Adrenal gland (tissue), 19 donors: ENCODE measurements at regions of chr6 and their contacts with region 1.

Region 1: DNA sequence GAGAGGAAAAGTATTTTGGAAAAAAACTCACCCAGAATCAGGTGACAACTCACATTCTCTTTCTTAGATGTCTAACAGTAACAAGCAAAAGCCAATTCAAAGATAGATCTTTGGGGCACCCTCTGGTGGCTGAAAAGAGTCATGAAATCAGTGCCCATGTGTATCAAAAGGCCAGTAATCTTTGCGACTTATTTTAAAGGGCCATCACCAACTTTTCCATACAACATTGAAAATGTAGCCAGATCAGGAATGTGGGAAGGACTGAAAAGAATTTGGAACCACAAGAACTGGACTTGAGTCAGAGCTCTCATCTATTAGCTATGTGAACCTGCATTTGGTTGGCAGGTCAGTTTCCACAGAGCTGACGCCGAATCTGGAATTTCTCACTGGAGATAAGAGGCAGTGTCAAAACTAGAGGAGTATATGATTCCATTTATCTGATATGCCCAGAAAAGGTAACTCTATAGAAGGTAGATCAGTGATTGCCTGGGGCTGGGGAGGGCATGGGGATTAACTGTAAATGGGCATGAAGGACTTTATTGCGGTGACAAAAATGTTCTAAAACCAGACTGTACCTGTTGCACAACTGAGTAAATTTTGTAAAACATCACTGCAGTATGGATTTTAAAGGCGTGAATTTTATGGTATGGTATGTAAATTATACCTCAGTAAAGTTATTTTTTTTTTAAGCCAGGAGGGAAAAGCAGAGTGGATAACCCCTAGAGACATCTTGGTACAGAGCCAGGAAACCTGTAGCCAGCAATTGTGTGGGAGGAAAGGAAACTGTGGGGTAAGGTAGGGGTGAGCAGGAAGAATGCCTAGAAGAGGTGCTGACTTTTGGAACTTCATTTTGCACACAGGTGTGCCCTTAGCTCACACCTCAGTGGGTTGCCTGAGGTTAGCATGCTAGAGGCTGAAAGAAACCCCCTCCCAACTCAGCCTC is 117.1 kb upstream of the ASF1A start:
- DNase-seq: peak; percentile 76 to 95 (median 84)
- H3K4me3 ChIP-seq: no peak overlapping the region
- H3K27ac ChIP-seq: no peak overlapping the region
- H3K4me1 ChIP-seq: peaks cover 4 to 6% of the 10 kb centered on the region in 2 donors
- H3K27me3 ChIP-seq: no peaks in the 10 kb centered on the region
- CTCF ChIP-seq: peak; percentile 73 to 89 (median 86)
- POLR2A ChIP-seq: no peak

Region 2: DNA sequence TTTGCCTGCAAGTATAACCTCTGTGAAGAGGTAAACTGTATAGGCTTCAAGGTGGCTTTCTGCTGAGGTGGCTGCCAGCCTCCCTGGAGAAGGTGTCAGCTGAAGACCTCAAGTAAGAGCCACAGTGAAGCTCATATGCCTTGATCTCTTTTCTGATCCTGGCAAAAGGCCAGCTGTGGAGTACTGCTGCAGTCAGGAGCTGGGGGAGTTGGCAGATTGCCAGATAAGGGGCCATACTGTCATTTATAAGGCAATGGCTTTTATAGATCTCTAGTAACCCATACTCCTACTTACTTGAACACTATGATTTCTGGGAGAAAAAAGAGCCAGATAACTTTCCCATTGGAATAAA is 116.7 kb before region 1 on chr6:
- intact Hi-C with region 1: loop called in 1 of 2 experiments (anchors 10 kb)
- DNase-seq: peak in 4 of 7 donors; percentile 23 to 40 (median 34)
- H3K4me3 ChIP-seq: no peak overlapping the region
- H3K27ac ChIP-seq: peak overlapping the region in 2 of 5 donors; percentile 16 to 74
- H3K4me1 ChIP-seq: peaks cover 3 to 11% of the 10 kb centered on the region in 2 donors
- H3K27me3 ChIP-seq: no peaks in the 10 kb centered on the region
- CTCF ChIP-seq: no peak
- POLR2A ChIP-seq: no peak

Region 3: DNA sequence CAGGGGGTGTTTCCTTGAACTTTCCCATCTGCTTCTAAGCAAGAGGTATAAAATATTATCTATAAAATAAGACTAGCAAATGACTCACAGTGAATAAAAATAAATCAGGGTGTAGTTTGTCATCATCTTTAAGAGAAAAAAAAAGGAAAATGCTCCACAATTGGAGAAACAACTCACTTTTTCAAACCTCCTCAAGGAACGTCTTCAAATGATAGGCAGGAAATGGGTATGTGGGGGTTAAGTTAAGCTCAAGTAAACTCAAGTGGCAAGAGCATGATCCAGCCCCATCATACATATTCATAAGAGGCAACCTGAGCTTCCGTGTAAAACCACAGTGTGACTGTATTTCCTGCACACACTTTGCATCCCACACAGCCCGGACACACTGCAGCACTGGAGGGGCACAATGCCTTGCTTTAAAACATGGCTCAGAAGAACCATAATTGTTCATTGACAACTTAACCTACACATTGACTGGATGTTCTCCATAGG is 67.0 kb before region 1 on chr6:
- intact Hi-C with region 1: loop called in 1 of 2 experiments (anchors 10 kb)
- DNase-seq: peak in 5 of 7 donors; percentile 33 to 57 (median 40)
- H3K4me3 ChIP-seq: peak overlapping the region in 1 of 4 donors; percentile 52
- H3K27ac ChIP-seq: peak overlapping the region; percentile 87 to 95 (median 90)
- H3K4me1 ChIP-seq: peaks cover 20 to 36% of the 10 kb centered on the region in 2 donors
- H3K27me3 ChIP-seq: no peaks in the 10 kb centered on the region
- CTCF ChIP-seq: no peak
- POLR2A ChIP-seq: peak in 1 of 2 donors; percentile 15

Region 4: GRCh38 chr6:118864341-118865099 is 87.6 kb after region 1 on chr6:
- intact Hi-C with region 1: no loop called
- DNase-seq: no peak
- H3K4me3 ChIP-seq: no peak overlapping the region
- H3K27ac ChIP-seq: no peak overlapping the region
- H3K4me1 ChIP-seq: peaks cover 0 to 8% of the 10 kb centered on the region in 2 donors
- H3K27me3 ChIP-seq: no peaks in the 10 kb centered on the region
- CTCF ChIP-seq: no peak
- POLR2A ChIP-seq: no peak

Region 5: DNA sequence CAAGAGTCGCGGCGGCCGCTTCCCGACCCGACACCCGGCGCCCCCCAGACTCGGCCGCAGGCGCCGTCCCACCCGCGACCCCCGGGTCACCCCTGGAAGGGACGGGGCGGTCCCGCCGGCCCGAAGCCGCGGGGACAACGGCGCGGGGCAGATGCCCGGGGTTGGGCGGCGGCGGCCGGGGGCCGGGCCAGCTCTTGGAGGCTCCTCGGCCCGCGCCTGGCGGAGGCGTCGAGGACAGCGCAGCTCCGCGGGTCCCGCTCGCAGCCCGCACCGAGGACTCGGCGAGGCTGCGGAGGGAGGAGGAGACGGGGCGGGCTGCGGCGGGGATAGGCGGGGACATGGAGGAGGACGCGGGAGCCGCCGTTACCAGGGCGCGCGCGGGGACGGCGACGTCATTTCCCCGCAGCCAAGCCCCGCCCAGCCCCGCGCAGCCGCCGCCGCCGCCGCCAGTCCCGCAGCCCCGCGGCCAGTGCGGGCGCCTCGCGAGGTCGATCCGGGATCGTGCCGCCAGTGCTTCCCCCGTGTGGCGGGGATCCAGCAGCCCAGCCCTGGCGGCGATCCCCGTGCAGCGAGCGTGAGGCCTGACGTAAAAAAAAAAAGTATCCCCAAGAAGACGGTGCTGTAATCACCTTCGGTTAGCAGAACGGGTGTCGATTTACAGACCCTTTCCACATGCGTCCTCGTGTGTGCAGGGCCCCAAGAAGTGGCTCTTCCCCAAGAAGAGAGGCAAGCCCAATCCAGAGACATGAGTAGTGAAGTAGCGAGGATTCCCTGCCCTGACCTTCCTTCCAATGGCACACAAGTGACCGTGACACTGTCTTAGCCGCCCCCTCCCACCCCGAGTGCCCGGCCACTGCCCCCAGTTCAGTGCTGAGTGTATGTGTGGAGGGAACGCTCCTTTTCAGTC is 301.8 kb after region 1 on chr6 and contains the start of gene FAM184A:
- intact Hi-C with region 1: no loop called
- DNase-seq: peak; percentile 45 to 73 (median 68)
- H3K4me3 ChIP-seq: peak within 1 kb of the TSS in 3 of 4 donors; percentile 32 to 85 (median 71)
- H3K27ac ChIP-seq: peak within 1 kb of the TSS in 3 of 5 donors; percentile 58 to 75 (median 68)
- H3K4me1 ChIP-seq: peaks cover 0 to 13% of the 10 kb centered on the region in 2 donors
- H3K27me3 ChIP-seq: no peaks in the 10 kb centered on the region
- CTCF ChIP-seq: peak in 5 of 6 experiments; percentile 22 to 33 (median 25)
- POLR2A ChIP-seq: peak in 1 of 2 donors; percentile 47
- total RNA-seq, gene FAM184A: 0.91 to 4.3 (median 2.2) TPM

Region 6: GRCh38 chr6:119757467-119757866 is 980.6 kb after region 1 on chr6:
- intact Hi-C with region 1: no loop called
- DNase-seq: no peak
- H3K4me3 ChIP-seq: no peak overlapping the region
- H3K27ac ChIP-seq: no peak overlapping the region
- H3K4me1 ChIP-seq: no peaks in the 10 kb centered on the region
- H3K27me3 ChIP-seq: no peaks in the 10 kb centered on the region
- CTCF ChIP-seq: no peak
- POLR2A ChIP-seq: no peak